ENCODE measurements at regions of chrX and their contacts with region 1.

Region 1: GRCh38 chrX:111244235-111244750 is 26.0 kb downstream of the CAPN6 start:
- DNase-seq: no peak
- H3K4me3 ChIP-seq: no peak overlapping the region
- H3K27ac ChIP-seq: no peak overlapping the region
- H3K4me1 ChIP-seq: no peaks in the 10 kb centered on the region
- H3K27me3 ChIP-seq: no peaks in the 10 kb centered on the region
- CTCF ChIP-seq: peak in 1 of 3 donors; percentile 37
- EP300 ChIP-seq: no peak
- POLR2A ChIP-seq: no peak

Region 2: DNA sequence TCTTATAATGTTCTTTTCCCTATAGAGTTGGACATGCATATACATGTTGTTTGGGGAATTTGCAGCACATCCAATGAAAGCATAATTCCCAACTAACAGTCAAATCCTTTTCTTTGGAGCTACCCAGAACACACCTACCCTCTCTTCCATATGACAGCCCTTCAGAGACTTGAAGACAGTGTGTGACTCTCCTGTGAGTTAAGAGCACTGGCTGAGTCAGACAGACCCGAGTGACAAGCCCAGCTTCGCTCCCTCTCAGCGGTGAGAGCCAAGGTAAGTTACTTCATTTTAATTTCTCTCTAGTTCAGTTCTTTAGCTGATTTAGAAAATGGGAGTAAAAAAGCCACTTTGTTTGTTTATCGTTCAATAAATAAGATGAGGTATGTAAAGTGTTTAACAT is 799.3 kb before region 1 on chrX:
- intact Hi-C with region 1: loop called in 1 of 4 experiments (anchors 5 kb)
- DNase-seq: no peak
- H3K4me3 ChIP-seq: no peak overlapping the region
- H3K27ac ChIP-seq: no peak overlapping the region
- H3K4me1 ChIP-seq: no peaks in the 10 kb centered on the region
- H3K27me3 ChIP-seq: no peaks in the 10 kb centered on the region
- CTCF ChIP-seq: no peak
- EP300 ChIP-seq: no peak
- POLR2A ChIP-seq: no peak

Measured in ovary (tissue), 10 donors.